ENCODE measurements at regions of chr6 and their contacts with region 1.

Region 1: DNA sequence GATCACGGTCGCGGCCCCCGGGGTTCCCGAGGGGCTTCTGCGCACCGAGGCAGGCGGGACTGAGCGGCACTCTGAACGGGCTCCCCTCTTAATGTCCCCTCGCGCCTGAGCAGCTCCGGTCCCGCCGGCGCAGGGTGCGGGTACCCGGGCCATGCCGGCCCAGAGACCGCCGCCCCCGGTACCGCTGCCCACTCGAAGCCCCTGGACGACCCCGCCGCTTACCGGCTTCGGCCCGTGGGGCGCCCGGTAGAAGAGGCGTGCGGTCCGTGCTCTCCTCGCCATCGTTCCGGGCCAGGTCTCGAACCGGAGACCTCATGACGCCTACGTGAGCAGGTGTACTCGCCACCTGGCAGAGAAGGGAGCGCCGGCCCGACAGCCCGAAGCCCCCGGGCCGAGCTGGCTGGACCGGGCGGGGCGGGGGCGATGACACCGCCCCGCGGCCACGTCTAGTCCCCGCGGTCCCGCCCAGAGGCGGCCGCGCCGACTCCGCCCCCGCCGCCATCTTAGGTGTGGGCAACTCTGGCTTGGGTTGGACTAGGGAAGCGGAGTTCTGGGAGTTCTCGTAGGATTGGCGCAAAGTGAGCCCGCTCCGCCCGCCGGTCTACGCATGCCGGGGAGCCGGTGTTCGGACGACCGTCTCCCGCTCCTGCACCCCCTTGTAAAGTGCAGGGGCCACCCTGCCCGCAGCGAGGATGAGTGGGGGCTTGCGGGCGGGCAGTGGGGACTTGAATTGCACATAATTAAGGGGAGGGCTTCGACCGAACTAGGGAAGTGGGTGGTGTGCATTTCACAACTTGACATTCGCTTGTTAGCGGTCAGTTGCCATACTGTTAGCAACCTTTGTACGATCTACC is at the start of gene SLC17A5:
- DNase-seq: peak; percentile 87 to 89
- ATAC-seq: peak; percentile 90 to 95
- H3K4me3 ChIP-seq: peak within 1 kb of the TSS; percentile 86
- H3K27ac ChIP-seq: peak within 1 kb of the TSS; percentile 90 to 97
- H3K4me1 ChIP-seq: peaks cover 16% of the 10 kb centered on the region; the same call in 2 of the 3 replicates
- CTCF ChIP-seq: no peak
- EP300 ChIP-seq: no peak
- POLR2A ChIP-seq: peak; percentile 61
- RAD21 ChIP-seq: no peak
- polyA plus RNA-seq, gene SLC17A5: 9.6 and 10.0 TPM in 2 replicates

Region 2: DNA sequence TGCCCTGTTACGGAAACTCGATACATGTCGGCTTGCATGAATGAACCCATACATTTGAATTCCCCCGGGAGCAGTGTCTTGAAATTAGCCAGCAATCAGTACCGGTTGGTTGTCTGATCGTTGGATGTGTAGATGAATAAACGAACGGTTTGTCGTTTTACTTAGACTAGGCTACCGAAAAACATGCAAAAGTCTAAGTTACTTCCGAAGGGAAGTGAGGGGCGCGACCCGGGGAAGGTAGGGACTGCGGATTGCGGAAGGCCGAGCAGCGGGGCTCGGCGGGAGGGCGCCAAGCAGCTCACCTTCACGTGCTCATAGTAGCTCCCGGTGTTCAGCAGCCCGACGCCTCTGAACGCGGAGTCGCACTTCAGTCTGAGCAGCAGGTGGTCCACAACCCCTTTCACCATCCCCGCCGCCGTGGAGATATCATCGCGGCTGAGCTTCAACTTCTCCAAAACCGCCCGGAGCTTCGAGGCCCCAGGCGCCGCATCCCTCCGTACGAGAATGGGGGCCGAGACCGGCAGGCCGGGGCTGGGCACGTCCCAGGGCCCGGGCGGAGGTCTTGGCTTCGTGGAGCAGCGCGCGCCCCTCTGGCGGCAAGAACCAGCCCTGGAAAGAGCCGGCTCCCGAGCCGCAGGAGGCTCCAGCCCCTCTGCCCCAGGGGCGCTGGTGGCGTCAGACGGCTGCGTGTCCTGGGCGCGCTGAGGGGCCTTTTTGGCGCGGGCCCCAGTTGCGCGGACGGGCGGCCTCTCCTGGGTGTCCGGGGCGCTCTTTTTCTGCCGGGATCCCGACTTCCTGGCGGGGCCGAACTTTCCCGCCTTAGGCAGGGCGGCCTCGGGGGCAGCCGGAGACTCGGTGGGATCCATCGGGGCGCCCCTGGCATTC is 202.3 kb before region 1 on chr6:
- CTCF ChIA-PET with region 1: interaction called, 5 read pairs
- POLR2A ChIA-PET with region 1: interaction called, 10 read pairs
- DNase-seq: peak; percentile 29 to 58
- ATAC-seq: peak; percentile 83 to 89
- H3K4me3 ChIP-seq: peak overlapping the region; percentile 60
- H3K27ac ChIP-seq: peak overlapping the region; percentile 86 to 97
- H3K4me1 ChIP-seq: no peaks in the 10 kb centered on the region
- CTCF ChIP-seq: no peak
- EP300 ChIP-seq: no peak
- POLR2A ChIP-seq: no peak
- RAD21 ChIP-seq: no peak

Region 3: GRCh38 chr6:73461537-73462350 is 192.1 kb before region 1 on chr6 and contains the start of gene MTO1:
- CTCF ChIA-PET with region 1: interaction called, 3 read pairs
- POLR2A ChIA-PET with region 1: interaction called, 13 read pairs
- DNase-seq: peak; percentile 86 to 88
- ATAC-seq: peak; percentile 99
- H3K4me3 ChIP-seq: peak within 1 kb of the TSS; percentile 65
- H3K27ac ChIP-seq: peak within 1 kb of the TSS; percentile 87 to 89
- H3K4me1 ChIP-seq: no peaks in the 10 kb centered on the region
- CTCF ChIP-seq: no peak
- EP300 ChIP-seq: no peak
- POLR2A ChIP-seq: peak; percentile 50
- RAD21 ChIP-seq: no peak
- polyA plus RNA-seq, gene MTO1: 19.9 and 22.1 TPM in 2 replicates

Region 4: DNA sequence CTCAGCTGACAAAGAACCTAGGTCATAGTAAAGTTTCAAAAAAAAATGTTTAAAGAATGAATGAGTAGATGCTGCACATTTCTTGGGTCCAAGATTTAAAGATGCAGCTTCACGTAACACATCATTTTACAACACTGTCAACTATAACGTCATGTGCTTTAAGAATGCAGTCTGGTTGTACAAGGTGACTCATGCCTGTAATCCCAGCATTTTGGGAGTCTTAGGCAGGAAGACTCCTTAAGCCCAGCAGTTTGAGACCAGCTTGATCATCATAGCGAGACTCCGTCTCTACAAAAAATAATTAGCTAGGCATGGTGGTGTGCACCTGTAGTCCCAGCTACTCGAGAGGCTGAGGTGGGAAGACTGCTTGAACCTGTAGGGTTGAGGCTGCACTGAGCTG is 21.9 kb before region 1 on chr6:
- CTCF ChIA-PET with region 1: interaction called, 10 read pairs
- POLR2A ChIA-PET with region 1: no interaction called
- DNase-seq: no peak
- ATAC-seq: no peak
- H3K4me3 ChIP-seq: no peak overlapping the region
- H3K27ac ChIP-seq: no peak overlapping the region
- H3K4me1 ChIP-seq: no peaks in the 10 kb centered on the region
- CTCF ChIP-seq: no peak
- EP300 ChIP-seq: no peak
- POLR2A ChIP-seq: no peak
- RAD21 ChIP-seq: no peak